K562 (cell line): ENCODE measurements at regions of chr14 and their contacts with region 1.

Region 1: GRCh38 chr14:75328558-75329155 is 50.0 kb downstream of the FOS start:
- DNase-seq: no peak
- ATAC-seq: no peak
- H3K4me3 ChIP-seq: no peak overlapping the region
- H3K27ac ChIP-seq: no peak overlapping the region
- H3K4me1 ChIP-seq: no peaks in the 10 kb centered on the region; a peak in 1 of 5 replicates
- H3K27me3 ChIP-seq: peaks cover 3 to 16% of the 10 kb centered on the region in 2 experiments; a peak in 3 of 5 replicates
- CTCF ChIP-seq: no peak
- EP300 ChIP-seq: no peak
- POLR2A ChIP-seq: no peak
- RAD21 ChIP-seq: no peak

Region 2: DNA sequence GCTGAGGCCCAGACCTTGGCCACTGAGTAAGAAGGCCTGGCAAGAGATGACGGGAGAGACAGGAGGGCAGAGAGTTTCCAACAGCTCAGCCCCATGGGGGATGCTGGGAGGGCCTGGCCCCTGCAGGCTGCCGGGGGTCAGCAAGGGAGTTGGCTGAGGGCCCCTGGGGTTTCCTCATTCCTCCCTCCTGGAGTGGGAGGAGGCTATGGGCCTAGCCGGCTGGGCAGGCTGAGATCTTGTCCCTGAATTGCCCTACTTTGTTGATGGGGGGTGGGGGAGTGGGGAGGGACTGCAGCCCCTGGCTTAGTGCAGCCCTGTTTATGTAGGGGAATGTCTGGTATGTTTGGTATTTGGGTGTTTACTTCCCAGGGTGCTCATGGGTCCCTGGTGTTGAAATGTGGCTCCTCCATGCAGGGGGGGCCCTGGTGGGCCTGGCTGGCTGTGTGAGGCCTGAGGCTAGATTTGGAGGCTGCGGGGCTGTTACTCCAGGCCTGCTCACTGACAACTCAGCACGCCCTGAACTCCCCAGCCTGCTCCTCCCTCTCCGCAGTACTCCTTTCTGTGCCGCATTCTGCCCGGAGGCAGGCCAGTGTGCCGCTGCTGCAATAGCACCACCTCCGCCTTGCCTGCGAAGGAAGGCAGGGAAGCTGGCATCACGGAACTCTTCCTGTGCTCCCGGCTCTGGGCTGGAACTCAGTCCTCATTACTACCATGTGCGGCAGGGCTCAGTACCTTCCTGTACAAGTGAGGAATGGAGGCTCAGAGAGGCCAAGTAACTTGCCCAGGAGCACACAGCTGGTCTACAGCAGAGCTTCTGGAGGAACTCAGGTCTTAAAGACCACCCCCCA is 124.5 kb after region 1 on chr14:
- CTCF ChIA-PET with region 1: no interaction called
- POLR2A ChIA-PET with region 1: no interaction called
- in situ Hi-C with region 1: no loop called
- intact Hi-C with region 1: no loop called
- DNase-seq: no peak
- ATAC-seq: no peak
- H3K4me3 ChIP-seq: no peak overlapping the region
- H3K27ac ChIP-seq: no peak overlapping the region
- H3K4me1 ChIP-seq: peaks cover 0 to 14% of the 10 kb centered on the region in 2 experiments; a peak in 3 of 5 replicates
- H3K27me3 ChIP-seq: no peaks in the 10 kb centered on the region
- CTCF ChIP-seq: no peak
- EP300 ChIP-seq: no peak
- POLR2A ChIP-seq: no peak
- RAD21 ChIP-seq: no peak

Region 3: DNA sequence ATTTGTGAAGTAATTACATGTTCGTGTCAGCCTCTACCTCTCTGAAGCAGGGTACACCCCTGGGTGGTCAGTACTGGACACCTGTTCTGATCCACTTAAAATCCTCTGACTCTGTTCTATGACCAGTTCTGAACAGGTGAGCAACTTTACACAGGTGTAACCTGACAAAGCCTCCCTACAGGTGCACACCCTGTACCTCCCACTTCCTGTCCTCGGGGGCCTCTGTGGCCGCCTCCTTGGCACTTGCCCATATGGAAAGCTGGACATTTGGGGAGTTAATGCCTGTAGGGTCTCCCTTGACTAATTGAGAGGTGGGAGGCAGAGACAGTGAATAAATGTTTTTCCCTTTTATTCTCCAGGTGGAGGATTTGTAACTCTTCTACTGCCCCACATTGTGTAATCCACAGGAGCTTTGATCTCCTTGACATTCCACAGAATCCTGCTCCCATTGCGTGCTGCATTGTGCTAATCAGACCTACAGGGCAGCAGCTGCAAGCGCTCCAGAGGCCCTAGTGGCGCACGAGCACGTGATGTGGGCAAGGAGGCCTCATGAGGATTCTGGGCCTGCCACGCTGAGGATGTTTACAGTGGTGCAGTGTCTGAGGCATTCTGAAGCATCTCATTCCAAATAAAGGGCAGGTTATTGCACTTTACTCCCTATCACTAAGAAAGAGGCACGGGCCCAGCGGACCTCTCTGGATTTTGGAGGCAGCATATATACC is 147.8 kb after region 1 on chr14:
- CTCF ChIA-PET with region 1: no interaction called
- POLR2A ChIA-PET with region 1: no interaction called
- in situ Hi-C with region 1: no loop called
- intact Hi-C with region 1: loop called (anchors 5 kb)
- DNase-seq: no peak
- ATAC-seq: no peak
- H3K4me3 ChIP-seq: no peak overlapping the region
- H3K27ac ChIP-seq: no peak overlapping the region
- H3K4me1 ChIP-seq: no peaks in the 10 kb centered on the region; a peak in 1 of 5 replicates
- H3K27me3 ChIP-seq: peaks cover 0 to 20% of the 10 kb centered on the region in 2 experiments; a peak in 3 of 5 replicates
- CTCF ChIP-seq: no peak
- EP300 ChIP-seq: no peak
- POLR2A ChIP-seq: no peak
- RAD21 ChIP-seq: no peak